Activated CD4-positive, alpha-beta memory T cell treated with anti-CD3 and anti-CD28 coated beads for 36 hours (primary cell): ENCODE measurements at regions of chr1 and their contacts with region 1.

Region 1: GRCh38 chr1:155050560-155051341 is at the start of gene ADAM15:
- DNase-seq: peak; percentile 87
- H3K4me3 Mint-ChIP-seq: peak within 1 kb of the TSS; percentile 81
- H3K27ac Mint-ChIP-seq: peak within 1 kb of the TSS; percentile 64
- H3K4me1 Mint-ChIP-seq: peaks cover 22% of the 10 kb centered on the region
- H3K27me3 Mint-ChIP-seq: no peaks in the 10 kb centered on the region
- total RNA-seq, gene ADAM15: 54.3 to 60.5 TPM

Region 2: DNA sequence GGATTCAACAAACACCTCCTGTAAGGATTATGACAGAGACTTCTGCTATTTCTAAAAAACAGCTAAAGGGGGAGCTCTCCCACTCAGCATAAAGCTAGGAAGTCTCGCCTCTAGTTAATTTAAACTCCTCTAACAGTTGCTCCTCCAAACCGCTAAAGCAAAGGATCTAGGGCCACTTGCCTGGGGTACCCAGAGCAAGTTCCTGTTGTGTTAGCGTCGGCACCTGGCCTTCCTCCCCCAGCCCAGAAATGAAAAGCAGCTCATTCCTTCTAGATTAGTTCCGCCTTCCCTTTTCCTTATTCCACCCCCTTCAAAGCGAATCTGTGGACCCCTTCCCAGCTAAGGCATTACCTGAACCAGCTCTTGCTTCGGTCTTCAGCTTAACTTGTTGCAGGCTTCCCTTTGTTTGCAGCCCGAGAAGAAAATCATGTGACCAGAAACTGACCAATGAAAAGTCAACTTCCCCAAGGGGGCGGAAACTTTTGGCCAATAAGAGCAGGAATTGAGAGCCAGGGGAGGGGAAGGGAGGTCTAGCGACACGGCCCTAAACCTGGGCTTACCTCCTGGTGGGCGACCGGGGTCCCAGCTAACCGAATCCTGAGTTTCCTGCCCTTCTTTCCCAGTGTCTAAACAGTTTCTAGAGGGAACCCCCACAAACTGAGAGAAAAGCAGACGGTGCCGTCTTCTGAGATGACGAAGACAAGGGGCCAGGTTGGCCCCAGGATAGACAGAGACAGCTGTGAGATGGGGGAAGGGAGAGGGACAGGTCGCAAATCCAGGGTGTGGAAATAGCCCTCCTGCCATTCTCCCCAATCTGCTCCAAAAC is 94.8 kb before region 1 on chr1 and contains the start of gene PBXIP1:
- CTCF ChIA-PET with region 1: interaction called, 11 read pairs
- POLR2A ChIA-PET with region 1: interaction called, 4 read pairs
- intact Hi-C with region 1: no loop called
- DNase-seq: peak; percentile 89
- H3K4me3 Mint-ChIP-seq: peak within 1 kb of the TSS; percentile 92
- H3K27ac Mint-ChIP-seq: peak within 1 kb of the TSS; percentile 97
- H3K4me1 Mint-ChIP-seq: peaks cover 75% of the 10 kb centered on the region
- H3K27me3 Mint-ChIP-seq: no peaks in the 10 kb centered on the region
- total RNA-seq, gene PBXIP1: 55.9 to 57.3 TPM

Region 3: DNA sequence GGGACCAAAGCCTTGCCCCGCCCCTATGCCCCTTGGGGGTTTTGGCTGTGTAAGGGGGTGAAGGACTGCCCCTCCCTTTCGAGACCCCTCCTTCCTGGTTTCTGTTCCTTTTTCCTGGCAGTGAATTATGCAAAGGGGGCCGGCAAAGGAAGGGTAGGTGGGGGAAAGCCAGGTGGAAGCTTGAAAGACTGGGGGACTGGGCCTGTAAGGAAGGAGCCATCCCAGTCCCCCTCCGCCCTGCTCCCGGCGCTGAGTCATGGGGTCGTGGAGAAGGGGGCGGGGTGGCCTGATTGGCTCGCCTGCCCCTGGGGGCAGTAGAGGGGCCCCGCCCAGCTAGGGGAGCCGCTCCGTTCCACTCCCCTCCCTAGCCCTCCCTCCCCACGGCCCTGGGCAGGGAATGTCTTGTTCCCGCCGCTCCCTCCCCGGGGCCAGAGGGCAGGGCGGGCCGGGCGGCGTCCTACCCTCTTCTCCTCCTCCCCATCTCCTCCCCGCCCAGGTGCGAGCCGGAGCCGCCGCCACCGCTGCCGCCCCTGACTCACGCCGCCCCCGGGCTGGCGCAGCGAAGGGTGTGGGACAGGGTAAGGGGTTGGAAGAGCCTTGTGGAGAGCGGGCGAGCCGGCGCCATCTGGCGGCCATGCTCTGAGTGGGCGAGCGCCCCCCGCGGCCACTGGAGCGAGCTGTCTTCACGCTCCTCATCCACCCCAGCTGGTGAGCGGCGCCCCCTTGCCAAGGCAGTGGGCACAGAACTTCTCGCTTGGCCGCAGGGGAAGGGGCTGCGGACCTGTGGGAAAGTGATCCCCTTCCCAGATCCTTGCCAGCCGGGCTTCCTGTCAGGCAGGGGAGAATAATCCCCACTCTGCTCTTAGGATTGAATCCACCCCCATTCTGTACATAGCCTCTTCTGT is 33.5 kb before region 1 on chr1:
- CTCF ChIA-PET with region 1: interaction called, 14 read pairs
- POLR2A ChIA-PET with region 1: interaction called, 5 read pairs
- intact Hi-C with region 1: no loop called
- DNase-seq: peak; percentile 97
- H3K4me3 Mint-ChIP-seq: peak overlapping the region; percentile 37
- H3K27ac Mint-ChIP-seq: peak overlapping the region; percentile 78
- H3K4me1 Mint-ChIP-seq: peaks cover 63% of the 10 kb centered on the region
- H3K27me3 Mint-ChIP-seq: no peaks in the 10 kb centered on the region

Region 4: DNA sequence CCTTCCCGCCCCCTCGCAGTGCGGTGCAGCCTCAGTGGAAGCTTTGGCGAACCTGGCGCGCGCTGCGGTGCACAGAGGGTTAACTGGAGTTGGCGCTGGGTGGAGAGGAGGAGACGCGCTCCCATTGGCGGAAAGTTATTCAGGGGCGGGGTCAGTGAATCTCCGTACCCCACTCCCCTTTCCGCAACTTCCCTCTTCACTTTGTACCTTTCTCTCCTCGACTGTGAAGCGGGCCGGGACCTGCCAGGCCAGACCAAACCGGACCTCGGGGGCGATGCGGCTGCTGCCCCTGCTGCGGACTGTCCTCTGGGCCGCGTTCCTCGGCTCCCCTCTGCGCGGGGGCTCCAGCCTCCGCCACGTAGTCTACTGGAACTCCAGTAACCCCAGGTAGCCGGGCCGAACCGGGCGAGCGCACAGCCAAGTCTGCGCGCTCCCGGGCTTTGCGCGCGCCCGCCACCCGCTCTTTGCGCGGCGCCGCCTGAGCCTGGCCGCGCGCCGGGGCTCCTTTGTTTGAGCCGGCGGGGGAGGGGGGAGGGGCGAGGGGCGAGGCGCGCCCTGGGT is 12.9 kb after region 1 on chr1 and contains the start of gene EFNA4:
- CTCF ChIA-PET with region 1: interaction called, 245 read pairs
- POLR2A ChIA-PET with region 1: interaction called, 5 read pairs
- intact Hi-C with region 1: loop called (anchors 1 kb)
- DNase-seq: peak; percentile 89
- H3K4me3 Mint-ChIP-seq: peak within 1 kb of the TSS; percentile 80
- H3K27ac Mint-ChIP-seq: peak within 1 kb of the TSS; percentile 31
- H3K4me1 Mint-ChIP-seq: peaks cover 29% of the 10 kb centered on the region
- H3K27me3 Mint-ChIP-seq: no peaks in the 10 kb centered on the region
- total RNA-seq, gene EFNA4: 5.0 to 6.1 TPM

Region 5: DNA sequence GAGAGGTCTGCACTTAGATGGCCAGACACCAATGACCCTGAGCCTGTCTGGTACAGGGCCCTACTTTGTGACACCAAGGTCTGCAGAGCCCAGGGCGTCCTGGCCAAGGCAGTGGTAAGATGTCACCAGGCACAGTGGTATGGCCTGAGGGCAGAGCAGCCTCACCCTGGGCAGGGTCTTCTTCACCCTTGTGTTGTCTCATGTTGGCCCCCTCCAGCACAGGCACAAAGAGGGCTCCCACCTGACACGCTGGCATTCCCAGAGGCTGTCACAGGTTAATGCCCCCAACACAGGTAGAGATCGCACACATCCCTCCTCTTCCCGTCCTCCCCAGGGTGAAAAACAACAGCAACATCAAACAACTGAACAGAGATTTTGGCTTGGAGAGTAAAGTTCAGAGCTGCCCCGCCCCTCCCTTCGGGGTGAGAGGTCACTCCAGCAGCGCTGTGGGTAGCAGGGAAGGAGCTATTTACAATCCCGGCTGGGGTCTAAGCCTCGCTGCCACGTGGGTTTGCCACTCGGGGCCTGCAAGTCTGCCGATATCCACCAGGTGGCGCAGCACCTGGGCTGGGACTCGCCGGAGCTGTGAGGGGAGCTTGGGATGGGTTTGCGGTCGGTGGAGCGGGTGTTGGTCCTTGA is 40.4 kb after region 1 on chr1:
- CTCF ChIA-PET with region 1: interaction called, 92 read pairs
- POLR2A ChIA-PET with region 1: no interaction called
- intact Hi-C with region 1: no loop called
- DNase-seq: peak; percentile 87
- H3K4me3 Mint-ChIP-seq: no peak overlapping the region
- H3K27ac Mint-ChIP-seq: no peak overlapping the region
- H3K4me1 Mint-ChIP-seq: peaks cover 3% of the 10 kb centered on the region
- H3K27me3 Mint-ChIP-seq: peaks cover 8% of the 10 kb centered on the region

Region 6: GRCh38 chr1:155472491-155473083 is 421.8 kb after region 1 on chr1:
- CTCF ChIA-PET with region 1: no interaction called
- POLR2A ChIA-PET with region 1: no interaction called
- intact Hi-C with region 1: no loop called
- DNase-seq: no peak
- H3K4me3 Mint-ChIP-seq: no peak overlapping the region
- H3K27ac Mint-ChIP-seq: no peak overlapping the region
- H3K4me1 Mint-ChIP-seq: peaks cover 25% of the 10 kb centered on the region
- H3K27me3 Mint-ChIP-seq: no peaks in the 10 kb centered on the region